ENCODE measurements at regions of chr6 and their contacts with region 1.

Region 1: GRCh38 chr6:149431905-149432775 is 32.1 kb downstream of the SUMO4 start:
- DNase-seq: peak; percentile 71 to 89 (median 81)
- H3K4me3 ChIP-seq: no peak overlapping the region
- H3K4me3 Mint-ChIP-seq: peak overlapping the region in 6 of 7 donors; percentile 19 to 82 (median 73)
- H3K27ac ChIP-seq: no peak overlapping the region
- H3K27ac Mint-ChIP-seq: peak overlapping the region in 1 of 8 donors; percentile 65
- H3K4me1 ChIP-seq: peaks cover 4% of the 10 kb centered on the region
- H3K4me1 Mint-ChIP-seq: peaks cover 3 to 8% (median 8%) of the 10 kb centered on the region in 3 donors
- H3K27me3 ChIP-seq: no peaks in the 10 kb centered on the region
- H3K27me3 Mint-ChIP-seq: peaks cover 0 to 1% of the 10 kb centered on the region in 2 donors

Region 2: DNA sequence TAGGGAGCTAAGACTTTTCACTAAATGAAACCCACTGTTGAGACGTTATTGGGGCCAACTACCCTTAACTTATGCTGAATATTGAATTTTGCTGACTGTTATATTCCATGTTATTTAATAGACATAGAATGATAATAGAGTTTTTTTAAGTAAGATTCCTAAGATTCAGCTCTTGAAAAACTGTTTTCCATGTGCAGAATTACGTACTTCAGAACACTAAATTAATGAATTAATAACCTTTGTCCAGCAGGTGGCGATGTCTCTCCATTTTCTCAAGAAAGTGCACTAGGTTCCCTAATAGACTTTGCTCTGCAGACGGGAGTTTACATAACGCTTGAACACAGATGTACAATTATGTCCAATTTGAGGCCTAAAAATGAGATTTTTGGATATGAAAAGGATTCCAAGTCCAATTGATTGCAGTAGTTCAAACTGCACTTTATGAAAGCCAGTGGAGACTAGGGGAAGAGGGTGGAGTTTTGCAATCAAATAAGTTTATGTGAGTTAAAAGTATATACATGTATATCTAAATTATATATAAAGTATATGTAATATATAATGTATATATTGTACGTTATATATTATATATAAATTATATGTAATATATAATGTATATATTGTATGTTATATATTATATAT is 403.3 kb before region 1 on chr6:
- CTCF ChIA-PET with region 1: interaction called, 57 read pairs
- POLR2A ChIA-PET with region 1: interaction called, 5 read pairs
- DNase-seq: peak; percentile 50 to 73 (median 68)
- H3K4me3 ChIP-seq: no peak overlapping the region
- H3K4me3 Mint-ChIP-seq: peak overlapping the region in 2 of 7 donors; percentile 26 to 68
- H3K27ac ChIP-seq: no peak overlapping the region
- H3K27ac Mint-ChIP-seq: peak overlapping the region in 1 of 8 donors; percentile 88
- H3K4me1 ChIP-seq: no peaks in the 10 kb centered on the region
- H3K4me1 Mint-ChIP-seq: peaks cover 27 to 55% (median 53%) of the 10 kb centered on the region in 3 donors
- H3K27me3 ChIP-seq: no peaks in the 10 kb centered on the region
- H3K27me3 Mint-ChIP-seq: no peaks in the 10 kb centered on the region

Region 3: DNA sequence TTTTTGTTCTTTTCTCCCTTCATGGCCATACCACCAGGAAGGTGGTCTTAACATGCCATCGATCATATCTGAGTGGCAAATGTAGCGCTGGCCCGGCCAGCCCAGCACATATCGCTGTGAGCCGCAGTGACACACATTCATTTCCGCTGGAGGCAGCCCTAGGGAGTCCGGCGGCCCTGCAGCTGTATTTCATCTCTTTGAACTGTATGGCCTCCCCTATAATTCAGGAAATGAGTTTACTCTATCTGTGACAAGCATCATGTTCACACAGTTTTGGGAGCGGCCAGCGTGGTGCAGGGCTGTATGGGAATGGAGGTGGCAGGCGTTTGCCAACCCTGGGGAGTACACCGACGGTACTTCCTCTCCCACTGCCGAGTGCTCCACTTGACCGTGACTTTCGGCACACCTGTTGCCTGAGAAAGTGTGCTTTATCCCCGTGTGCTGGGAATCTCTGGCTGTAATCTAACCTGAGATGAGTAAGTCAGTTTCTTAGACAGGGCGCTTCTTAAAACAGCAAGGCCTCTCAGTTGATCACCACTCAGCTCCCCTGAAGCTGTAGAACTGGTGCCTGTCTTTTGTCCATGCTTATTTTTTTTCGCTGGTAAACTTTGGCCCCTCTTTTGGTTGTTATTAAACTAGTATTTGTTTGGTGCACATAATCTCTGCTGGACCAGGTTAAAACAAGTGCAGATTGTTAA is 371.7 kb before region 1 on chr6:
- CTCF ChIA-PET with region 1: interaction called, 14 read pairs
- POLR2A ChIA-PET with region 1: no interaction called
- DNase-seq: peak; percentile 31 to 68 (median 35)
- H3K4me3 ChIP-seq: peak overlapping the region; percentile 45
- H3K4me3 Mint-ChIP-seq: peak overlapping the region in 6 of 7 donors; percentile 75 to 86 (median 78)
- H3K27ac ChIP-seq: no peak overlapping the region
- H3K27ac Mint-ChIP-seq: peak overlapping the region; percentile 73 to 95 (median 88)
- H3K4me1 ChIP-seq: peaks cover 31% of the 10 kb centered on the region
- H3K4me1 Mint-ChIP-seq: peaks cover 27 to 53% (median 34%) of the 10 kb centered on the region in 3 donors
- H3K27me3 ChIP-seq: no peaks in the 10 kb centered on the region
- H3K27me3 Mint-ChIP-seq: peaks cover 0 to 1% of the 10 kb centered on the region in 2 donors

Region 4: GRCh38 chr6:149075616-149076364 is 356.4 kb before region 1 on chr6:
- CTCF ChIA-PET with region 1: interaction called, 32 read pairs
- POLR2A ChIA-PET with region 1: no interaction called
- DNase-seq: no peak
- H3K4me3 ChIP-seq: no peak overlapping the region
- H3K4me3 Mint-ChIP-seq: peak overlapping the region in 1 of 7 donors; percentile 10
- H3K27ac ChIP-seq: no peak overlapping the region
- H3K27ac Mint-ChIP-seq: peak overlapping the region in 6 of 8 donors; percentile 11 to 81 (median 54)
- H3K4me1 ChIP-seq: peaks cover 11% of the 10 kb centered on the region
- H3K4me1 Mint-ChIP-seq: peaks cover 6 to 26% (median 18%) of the 10 kb centered on the region in 3 donors
- H3K27me3 ChIP-seq: peaks cover 4% of the 10 kb centered on the region
- H3K27me3 Mint-ChIP-seq: peaks cover 0 to 3% of the 10 kb centered on the region in 2 donors

Region 5: GRCh38 chr6:149087891-149088290 is 344.2 kb before region 1 on chr6:
- CTCF ChIA-PET with region 1: interaction called, 41 read pairs
- POLR2A ChIA-PET with region 1: no interaction called
- DNase-seq: no peak
- H3K4me3 ChIP-seq: no peak overlapping the region
- H3K4me3 Mint-ChIP-seq: no peak overlapping the region
- H3K27ac ChIP-seq: no peak overlapping the region
- H3K27ac Mint-ChIP-seq: peak overlapping the region in 1 of 8 donors; percentile 40
- H3K4me1 ChIP-seq: peaks cover 13% of the 10 kb centered on the region
- H3K4me1 Mint-ChIP-seq: peaks cover 16 to 43% (median 32%) of the 10 kb centered on the region in 3 donors
- H3K27me3 ChIP-seq: no peaks in the 10 kb centered on the region
- H3K27me3 Mint-ChIP-seq: no peaks in the 10 kb centered on the region

Region 6: DNA sequence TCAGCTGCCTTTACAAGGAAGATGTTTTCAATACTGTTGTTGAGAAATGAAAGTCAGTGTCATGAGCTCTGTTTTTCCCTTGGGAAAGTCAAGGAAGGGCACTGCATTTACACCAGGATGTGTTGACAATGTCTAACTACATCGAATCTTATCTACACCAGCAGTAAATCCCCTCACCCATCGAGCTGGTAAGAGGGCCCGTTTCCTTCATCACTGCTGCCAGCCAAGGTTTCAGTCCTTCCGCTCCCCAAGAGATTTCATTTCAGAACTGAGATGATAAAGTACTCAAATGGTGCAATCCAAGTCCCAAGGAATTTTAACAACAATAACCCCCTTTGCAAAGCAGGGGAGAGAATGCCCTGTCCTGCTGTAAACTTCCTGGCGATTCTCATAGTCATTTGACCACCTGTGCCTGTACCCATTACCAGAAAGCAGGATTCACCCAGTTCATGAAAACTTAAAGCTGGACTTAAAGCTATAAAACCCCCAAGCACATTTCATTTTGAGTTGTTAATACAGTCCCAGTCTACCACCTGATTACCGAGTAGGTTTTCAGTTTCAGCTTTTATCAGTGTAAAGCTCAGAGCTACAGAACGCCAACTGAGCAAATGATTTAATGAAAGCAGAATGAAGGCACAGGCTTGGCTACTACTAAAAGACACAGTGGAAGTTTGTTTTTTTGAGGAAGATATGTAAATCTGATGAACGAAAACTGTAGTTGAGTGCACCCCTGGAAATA is 237.2 kb before region 1 on chr6:
- CTCF ChIA-PET with region 1: interaction called, 13 read pairs
- POLR2A ChIA-PET with region 1: no interaction called
- DNase-seq: no peak
- H3K4me3 ChIP-seq: no peak overlapping the region
- H3K4me3 Mint-ChIP-seq: peak overlapping the region in 6 of 7 donors; percentile 2 to 43 (median 20)
- H3K27ac ChIP-seq: no peak overlapping the region
- H3K27ac Mint-ChIP-seq: peak overlapping the region in 5 of 8 donors; percentile 8 to 59 (median 24)
- H3K4me1 ChIP-seq: peaks cover 5% of the 10 kb centered on the region
- H3K4me1 Mint-ChIP-seq: peaks cover 15 to 22% (median 21%) of the 10 kb centered on the region in 3 donors
- H3K27me3 ChIP-seq: no peaks in the 10 kb centered on the region
- H3K27me3 Mint-ChIP-seq: no peaks in the 10 kb centered on the region

Region 7: DNA sequence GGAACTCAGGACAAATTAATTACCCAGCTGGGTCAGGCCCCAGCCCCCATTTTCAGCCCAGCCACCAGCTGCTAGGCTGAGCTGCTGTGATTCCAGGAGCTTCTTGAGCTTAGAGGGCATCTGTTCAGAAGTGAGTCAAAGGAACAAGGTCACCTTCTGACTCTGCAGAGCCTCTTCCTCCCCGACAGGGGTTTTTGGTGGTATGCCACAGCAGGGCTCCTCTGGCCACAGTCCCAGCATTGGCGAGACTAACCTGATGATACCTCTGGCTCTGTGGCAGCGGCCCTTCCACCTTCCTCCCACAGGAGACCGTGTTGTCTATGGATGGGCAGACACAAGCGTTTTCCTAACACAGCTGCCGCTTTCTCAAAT is 12.9 kb after region 1 on chr6:
- CTCF ChIA-PET with region 1: interaction called, 17 read pairs
- POLR2A ChIA-PET with region 1: no interaction called
- DNase-seq: no peak
- H3K4me3 ChIP-seq: no peak overlapping the region
- H3K4me3 Mint-ChIP-seq: no peak overlapping the region
- H3K27ac ChIP-seq: no peak overlapping the region
- H3K27ac Mint-ChIP-seq: no peak overlapping the region
- H3K4me1 ChIP-seq: no peaks in the 10 kb centered on the region
- H3K4me1 Mint-ChIP-seq: peaks cover 0 to 8% (median 0%) of the 10 kb centered on the region in 3 donors
- H3K27me3 ChIP-seq: no peaks in the 10 kb centered on the region
- H3K27me3 Mint-ChIP-seq: no peaks in the 10 kb centered on the region

Region 8: DNA sequence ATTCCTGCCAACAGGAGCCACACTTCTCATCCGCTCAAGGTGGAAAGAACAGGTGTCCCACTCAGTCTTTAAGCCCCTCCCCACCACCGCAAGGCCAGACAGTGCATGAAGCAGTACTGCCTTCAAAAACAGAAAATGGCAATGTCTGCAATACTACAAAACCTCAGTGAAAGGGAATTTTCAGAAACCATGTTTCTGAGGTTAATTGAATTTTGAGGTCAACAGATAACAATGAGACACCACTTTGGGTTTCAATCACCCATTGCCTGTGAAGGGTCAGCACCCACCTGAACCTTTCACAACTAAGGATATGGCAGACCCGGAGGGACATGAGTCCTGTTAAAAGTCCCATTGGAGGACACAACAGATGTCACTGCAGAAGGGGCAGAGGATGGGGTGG is 39.7 kb after region 1 on chr6:
- CTCF ChIA-PET with region 1: no interaction called
- POLR2A ChIA-PET with region 1: no interaction called
- DNase-seq: no peak
- H3K4me3 ChIP-seq: no peak overlapping the region
- H3K4me3 Mint-ChIP-seq: peak overlapping the region in 2 of 7 donors; percentile 27 to 56
- H3K27ac ChIP-seq: no peak overlapping the region
- H3K27ac Mint-ChIP-seq: peak overlapping the region in 6 of 8 donors; percentile 44 to 85 (median 73)
- H3K4me1 ChIP-seq: peaks cover 33% of the 10 kb centered on the region
- H3K4me1 Mint-ChIP-seq: peaks cover 26 to 73% (median 52%) of the 10 kb centered on the region in 3 donors
- H3K27me3 ChIP-seq: no peaks in the 10 kb centered on the region
- H3K27me3 Mint-ChIP-seq: no peaks in the 10 kb centered on the region

Region 9: DNA sequence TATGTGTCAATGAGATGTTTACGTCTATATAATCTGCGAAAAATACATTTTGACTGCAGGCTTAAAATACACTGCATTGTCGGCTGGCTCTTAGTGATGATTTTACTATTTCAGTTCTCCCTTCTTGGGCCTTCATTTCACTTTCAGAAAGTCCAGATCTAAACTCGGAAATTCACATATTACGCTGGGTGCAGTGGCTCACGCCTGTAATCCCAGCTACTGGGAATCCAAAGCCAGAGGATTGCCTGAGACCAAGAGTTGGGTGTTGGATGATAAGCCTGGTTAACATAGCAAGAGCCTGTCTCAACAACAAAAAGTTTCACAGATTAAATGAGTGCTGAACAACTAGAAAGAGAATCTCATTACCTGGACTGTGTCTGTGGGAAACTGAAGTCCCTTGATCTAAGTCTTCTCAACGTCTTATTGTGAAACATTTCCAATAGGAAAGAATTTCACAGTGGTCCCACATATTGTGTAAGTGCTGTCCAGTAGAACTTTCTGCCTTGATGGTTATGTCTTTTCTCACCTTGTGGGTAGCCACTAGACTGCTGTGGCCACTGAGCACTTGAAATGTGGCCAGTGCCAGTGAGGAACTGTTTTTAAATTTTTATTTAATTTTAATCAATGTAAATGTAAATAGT is 135.9 kb after region 1 on chr6:
- CTCF ChIA-PET with region 1: no interaction called
- POLR2A ChIA-PET with region 1: no interaction called
- DNase-seq: no peak
- H3K4me3 ChIP-seq: no peak overlapping the region
- H3K4me3 Mint-ChIP-seq: peak overlapping the region; percentile 34 to 95 (median 74)
- H3K27ac ChIP-seq: no peak overlapping the region
- H3K27ac Mint-ChIP-seq: peak overlapping the region in 4 of 8 donors; percentile 23 to 61 (median 41)
- H3K4me1 ChIP-seq: peaks cover 16% of the 10 kb centered on the region
- H3K4me1 Mint-ChIP-seq: peaks cover 20 to 52% (median 29%) of the 10 kb centered on the region in 3 donors
- H3K27me3 ChIP-seq: no peaks in the 10 kb centered on the region
- H3K27me3 Mint-ChIP-seq: peaks cover 0 to 3% of the 10 kb centered on the region in 2 donors

Region 10: DNA sequence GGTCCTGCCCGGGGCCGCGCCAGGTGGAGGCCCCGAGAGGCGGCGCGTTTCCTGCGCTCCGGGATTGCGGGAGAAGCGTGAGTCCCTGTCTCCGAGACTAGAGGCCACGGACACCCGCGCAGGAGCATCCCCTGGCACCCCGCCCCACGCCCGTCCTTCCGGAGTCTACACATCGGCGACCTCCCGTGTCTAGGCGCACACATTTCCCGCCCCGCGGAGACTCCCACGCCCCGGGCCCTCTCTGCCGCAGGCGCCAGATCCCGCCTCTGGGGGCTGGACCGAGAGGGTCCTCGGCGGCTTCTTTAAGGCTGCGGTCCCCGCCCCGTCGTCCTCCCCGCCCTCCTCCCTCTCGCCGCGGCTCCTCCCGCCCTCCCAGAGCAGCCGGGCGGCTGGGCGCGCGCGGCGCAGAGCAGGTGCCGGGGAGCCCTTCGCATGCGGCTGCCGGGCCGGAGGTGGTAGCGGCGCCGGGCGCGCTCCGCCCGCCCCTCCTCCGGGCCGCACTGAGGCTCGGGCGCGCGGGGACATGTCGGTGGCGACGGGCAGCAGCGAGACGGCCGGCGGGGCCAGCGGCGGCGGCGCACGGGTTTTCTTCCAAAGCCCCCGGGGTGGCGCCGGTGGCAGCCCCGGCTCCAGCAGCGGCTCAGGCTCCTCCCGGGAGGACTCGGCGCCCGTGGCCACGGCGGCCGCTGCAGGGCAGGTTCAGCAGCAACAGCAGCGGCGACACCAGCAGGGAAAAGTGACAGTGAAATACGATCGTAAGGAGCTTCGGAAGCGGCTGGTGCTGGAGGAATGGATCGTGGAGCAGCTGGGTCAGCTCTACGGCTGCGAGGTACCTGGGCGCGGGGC is 710.8 kb after region 1 on chr6 and contains the start of gene PPP1R14C:
- CTCF ChIA-PET with region 1: no interaction called
- POLR2A ChIA-PET with region 1: no interaction called
- DNase-seq: peak in 2 of 5 donors; percentile 7 to 25
- H3K4me3 ChIP-seq: no peak within 1 kb of the TSS
- H3K4me3 Mint-ChIP-seq: peak within 1 kb of the TSS; percentile 69 to 87 (median 74)
- H3K27ac ChIP-seq: peak within 1 kb of the TSS; percentile 39
- H3K27ac Mint-ChIP-seq: peak within 1 kb of the TSS in 1 of 8 donors; percentile 51
- H3K4me1 ChIP-seq: no peaks in the 10 kb centered on the region
- H3K4me1 Mint-ChIP-seq: peaks cover 7 to 16% (median 11%) of the 10 kb centered on the region in 3 donors
- H3K27me3 ChIP-seq: peaks cover 22% of the 10 kb centered on the region
- H3K27me3 Mint-ChIP-seq: peaks cover 56 to 79% of the 10 kb centered on the region in 2 donors
- total RNA-seq, gene PPP1R14C: 1.4 to 1.6 TPM